ENCODE measurements at regions of chr3 and their contacts with region 1.

Region 1: GRCh38 chr3:66500576-66501482 is at the start of gene LRIG1:
- DNase-seq: peak; percentile 99
- ATAC-seq: peak; percentile 97
- H3K4me3 Mint-ChIP-seq: peak within 1 kb of the TSS; percentile 92
- H3K27ac Mint-ChIP-seq: peak within 1 kb of the TSS; percentile 88
- H3K4me1 Mint-ChIP-seq: peaks cover 43% of the 10 kb centered on the region
- H3K27me3 Mint-ChIP-seq: peaks cover 20% of the 10 kb centered on the region
- CTCF ChIP-seq: no peak
- total RNA-seq, gene LRIG1: 12.7 to 13.0 TPM

Region 2: GRCh38 chr3:66472313-66473134 is 28.3 kb before region 1 on chr3:
- CTCF ChIA-PET with region 1: interaction called, 5 read pairs
- POLR2A ChIA-PET with region 1: interaction called, 4 read pairs
- intact Hi-C with region 1: loop called (anchors 5 kb)
- DNase-seq: peak; percentile 69
- ATAC-seq: peak; percentile 81
- H3K4me3 Mint-ChIP-seq: peak overlapping the region; percentile 47
- H3K27ac Mint-ChIP-seq: peak overlapping the region; percentile 94
- H3K4me1 Mint-ChIP-seq: peaks cover 62% of the 10 kb centered on the region
- H3K27me3 Mint-ChIP-seq: no peaks in the 10 kb centered on the region
- CTCF ChIP-seq: no peak

Region 3: DNA sequence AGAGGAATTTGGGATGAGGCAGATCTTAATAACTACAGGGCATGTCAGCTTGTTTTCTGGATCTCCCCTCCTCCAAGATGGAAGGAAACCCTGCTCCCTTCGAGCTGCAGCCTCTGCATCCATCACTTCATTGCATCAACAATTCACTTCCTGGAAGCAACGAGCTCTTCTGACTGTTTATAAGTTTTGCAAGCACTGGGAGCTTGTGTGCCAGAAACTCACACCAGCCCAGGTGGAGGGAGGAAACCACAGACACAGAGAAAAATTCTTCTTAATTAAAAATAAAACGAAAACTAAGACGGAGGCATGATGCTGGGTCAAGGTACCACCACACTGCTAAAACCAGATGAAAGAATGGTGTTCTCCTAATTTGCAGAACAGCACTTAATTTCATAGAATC is 10.6 kb before region 1 on chr3:
- CTCF ChIA-PET with region 1: interaction called, 5 read pairs
- POLR2A ChIA-PET with region 1: interaction called, 14 read pairs
- intact Hi-C with region 1: no loop called
- DNase-seq: peak; percentile 49
- ATAC-seq: peak; percentile 40
- H3K4me3 Mint-ChIP-seq: peak overlapping the region; percentile 55
- H3K27ac Mint-ChIP-seq: peak overlapping the region; percentile 89
- H3K4me1 Mint-ChIP-seq: peaks cover 71% of the 10 kb centered on the region
- H3K27me3 Mint-ChIP-seq: no peaks in the 10 kb centered on the region
- CTCF ChIP-seq: no peak

Measured in activated CD8-positive, alpha-beta T cell treated with anti-CD3 and anti-CD28 coated beads for 36 hours (primary cell).